ENCODE measurements at regions of chrX and their contacts with region 1.

Region 1: GRCh38 chrX:68511255-68511654 is 12.4 kb downstream of the YIPF6 start:
- DNase-seq: peak; percentile 29 to 61 (median 30)
- ATAC-seq: peak; percentile 81
- H3K4me3 ChIP-seq: no peak overlapping the region
- H3K27ac ChIP-seq: no peak overlapping the region
- H3K4me1 ChIP-seq: no peaks in the 10 kb centered on the region; a peak in 1 of 5 replicates
- H3K27me3 ChIP-seq: no peaks in the 10 kb centered on the region
- CTCF ChIP-seq: peak; percentile 68 to 71 (median 70)
- EP300 ChIP-seq: no peak
- POLR2A ChIP-seq: no peak
- RAD21 ChIP-seq: peak; percentile 67 to 77

Region 2: DNA sequence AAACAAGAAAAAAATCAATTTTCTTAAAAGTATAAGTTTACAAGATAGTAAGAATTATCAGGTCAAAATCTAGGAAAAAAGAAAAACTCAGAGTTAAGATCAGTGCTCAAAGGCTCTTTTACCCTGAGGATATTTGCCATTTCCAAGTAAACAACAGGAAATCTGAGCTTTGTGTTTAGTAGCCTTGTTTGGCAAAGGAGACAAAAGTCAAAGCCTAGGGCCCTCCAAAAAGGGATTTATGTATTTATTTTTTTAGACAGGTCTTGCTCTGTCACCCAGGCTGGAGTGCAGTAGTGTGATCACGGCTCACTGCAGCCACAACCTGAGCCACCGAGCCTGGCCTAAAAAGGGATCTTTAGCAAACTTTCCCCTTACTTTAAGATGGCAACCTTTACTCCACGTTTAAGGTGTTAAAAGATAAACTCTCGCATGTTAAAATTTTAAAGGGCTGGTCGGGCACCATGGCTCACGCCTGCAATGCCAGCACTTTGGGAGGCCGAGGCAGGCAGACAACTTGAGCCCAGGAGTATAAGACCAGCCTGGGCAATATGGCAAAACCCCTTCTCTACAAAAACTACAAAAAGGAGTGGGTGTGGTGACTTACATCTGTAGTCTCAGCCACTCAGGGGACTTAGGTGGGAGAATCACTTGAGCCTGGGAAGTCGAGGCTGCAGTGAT is 56.6 kb before region 1 on chrX:
- CTCF ChIA-PET with region 1: no interaction called
- POLR2A ChIA-PET with region 1: no interaction called
- in situ Hi-C with region 1: no loop called
- intact Hi-C with region 1: no loop called
- DNase-seq: no peak
- ATAC-seq: no peak
- H3K4me3 ChIP-seq: no peak overlapping the region
- H3K27ac ChIP-seq: no peak overlapping the region
- H3K4me1 ChIP-seq: no peaks in the 10 kb centered on the region
- H3K27me3 ChIP-seq: no peaks in the 10 kb centered on the region; a peak in 1 of 5 replicates
- CTCF ChIP-seq: no peak
- EP300 ChIP-seq: no peak
- POLR2A ChIP-seq: no peak
- RAD21 ChIP-seq: no peak

Region 3: DNA sequence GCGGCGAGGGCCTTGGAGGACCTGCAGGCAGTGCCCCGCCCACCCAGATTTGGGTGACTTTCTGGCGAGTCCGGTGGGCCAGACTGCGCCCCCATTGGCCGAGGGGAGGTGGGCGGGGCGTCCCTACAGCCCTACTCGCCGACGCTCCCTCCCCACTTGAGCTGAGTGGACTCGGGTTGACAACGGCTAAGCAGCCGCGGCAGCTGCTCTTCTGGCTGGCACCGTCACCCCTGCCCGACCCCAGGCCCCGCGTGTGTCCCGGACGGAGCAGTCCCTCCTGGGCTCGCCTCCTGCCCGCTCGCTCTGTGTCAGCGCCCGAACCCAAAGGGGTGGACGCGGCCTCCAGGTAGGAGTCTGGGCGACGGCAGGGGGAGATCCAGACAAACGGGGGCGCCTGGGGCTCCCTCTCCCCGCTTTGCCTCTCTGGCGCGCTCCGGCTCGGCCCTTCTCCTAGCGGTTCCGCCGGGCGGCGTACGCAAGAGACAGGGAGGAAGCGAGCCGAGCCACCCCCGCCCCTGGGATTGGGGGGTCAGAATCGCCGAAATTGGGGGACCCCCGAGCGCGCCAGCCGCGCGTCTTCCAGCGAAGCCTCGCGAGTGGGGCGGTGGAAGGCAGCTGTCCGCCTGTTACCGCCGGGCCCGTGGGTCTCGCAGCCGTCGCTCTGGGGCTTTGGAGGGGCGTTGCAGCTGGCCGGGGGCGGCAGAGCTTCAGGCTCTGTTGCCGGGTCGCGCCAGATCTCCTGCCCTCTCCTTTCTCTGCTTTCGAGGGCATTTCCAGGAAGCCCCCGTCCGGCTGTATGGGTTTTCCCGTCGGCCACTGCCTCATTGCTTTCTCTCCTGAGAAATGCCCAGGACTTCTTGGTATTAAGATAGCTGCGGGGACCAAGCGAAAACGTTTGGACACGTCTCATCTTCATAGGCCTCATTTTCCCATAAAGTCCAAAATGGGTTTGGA is 182.5 kb after region 1 on chrX:
- CTCF ChIA-PET with region 1: no interaction called
- POLR2A ChIA-PET with region 1: no interaction called
- in situ Hi-C with region 1: no loop called
- intact Hi-C with region 1: loop called (anchors 10 kb)
- DNase-seq: peak; percentile 83 to 87 (median 86)
- ATAC-seq: peak; percentile 84
- H3K4me3 ChIP-seq: peak overlapping the region; percentile 62
- H3K27ac ChIP-seq: peak overlapping the region; percentile 67
- H3K4me1 ChIP-seq: peaks cover 6 to 16% of the 10 kb centered on the region in 2 experiments; a peak in 4 of 5 replicates
- H3K27me3 ChIP-seq: peaks cover 0 to 8% of the 10 kb centered on the region in 2 experiments; a peak in 1 of 5 replicates
- CTCF ChIP-seq: no peak
- EP300 ChIP-seq: no peak
- POLR2A ChIP-seq: peak; percentile 85
- RAD21 ChIP-seq: no peak

Region 4: GRCh38 chrX:68710870-68711576 is 199.8 kb after region 1 on chrX:
- CTCF ChIA-PET with region 1: interaction called, 3 read pairs
- POLR2A ChIA-PET with region 1: no interaction called
- in situ Hi-C with region 1: loop called (anchors 5 kb)
- intact Hi-C with region 1: loop called (anchors 1 kb)
- DNase-seq: peak; percentile 41 to 55 (median 42)
- ATAC-seq: peak; percentile 88
- H3K4me3 ChIP-seq: no peak overlapping the region
- H3K27ac ChIP-seq: no peak overlapping the region; the same call in 2 of the 3 replicates
- H3K4me1 ChIP-seq: no peaks in the 10 kb centered on the region; a peak in 2 of 5 replicates
- H3K27me3 ChIP-seq: no peaks in the 10 kb centered on the region
- CTCF ChIP-seq: peak; percentile 48 to 66 (median 58)
- EP300 ChIP-seq: no peak
- POLR2A ChIP-seq: no peak
- RAD21 ChIP-seq: peak; percentile 37 to 67

Region 5: DNA sequence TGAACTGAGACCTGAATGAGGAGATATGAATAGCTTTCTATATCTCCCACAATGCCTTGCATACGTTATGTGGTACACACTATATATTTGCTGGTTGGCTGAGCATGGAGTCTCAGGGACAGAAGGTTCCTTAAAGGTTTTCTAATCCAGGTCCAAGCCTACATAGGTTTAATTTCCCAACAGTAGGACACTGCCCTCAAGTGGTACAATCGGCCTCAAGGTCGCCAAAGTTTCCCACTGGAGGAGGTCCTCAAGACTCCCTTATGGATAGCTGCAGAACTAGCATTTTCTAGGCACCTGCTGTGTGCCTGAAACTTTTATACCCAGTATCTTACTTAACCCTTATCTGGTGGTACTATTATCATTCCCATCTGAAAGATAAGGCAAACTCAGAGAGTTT is 296.6 kb after region 1 on chrX:
- CTCF ChIA-PET with region 1: no interaction called
- POLR2A ChIA-PET with region 1: no interaction called
- in situ Hi-C with region 1: no loop called
- intact Hi-C with region 1: loop called (anchors 1 kb)
- DNase-seq: peak in 2 of 4 experiments; percentile 31 to 47
- ATAC-seq: peak; percentile 85
- H3K4me3 ChIP-seq: no peak overlapping the region
- H3K27ac ChIP-seq: no peak overlapping the region
- H3K4me1 ChIP-seq: no peaks in the 10 kb centered on the region
- H3K27me3 ChIP-seq: no peaks in the 10 kb centered on the region
- CTCF ChIP-seq: peak; percentile 36 to 58 (median 46); a peak in 5 of 6 replicates
- EP300 ChIP-seq: no peak
- POLR2A ChIP-seq: no peak
- RAD21 ChIP-seq: peak; percentile 44 to 71; a peak in 3 of 4 replicates